Ovary (tissue), 10 donors: ENCODE measurements at regions of chr7 and their contacts with region 1.

Region 1: DNA sequence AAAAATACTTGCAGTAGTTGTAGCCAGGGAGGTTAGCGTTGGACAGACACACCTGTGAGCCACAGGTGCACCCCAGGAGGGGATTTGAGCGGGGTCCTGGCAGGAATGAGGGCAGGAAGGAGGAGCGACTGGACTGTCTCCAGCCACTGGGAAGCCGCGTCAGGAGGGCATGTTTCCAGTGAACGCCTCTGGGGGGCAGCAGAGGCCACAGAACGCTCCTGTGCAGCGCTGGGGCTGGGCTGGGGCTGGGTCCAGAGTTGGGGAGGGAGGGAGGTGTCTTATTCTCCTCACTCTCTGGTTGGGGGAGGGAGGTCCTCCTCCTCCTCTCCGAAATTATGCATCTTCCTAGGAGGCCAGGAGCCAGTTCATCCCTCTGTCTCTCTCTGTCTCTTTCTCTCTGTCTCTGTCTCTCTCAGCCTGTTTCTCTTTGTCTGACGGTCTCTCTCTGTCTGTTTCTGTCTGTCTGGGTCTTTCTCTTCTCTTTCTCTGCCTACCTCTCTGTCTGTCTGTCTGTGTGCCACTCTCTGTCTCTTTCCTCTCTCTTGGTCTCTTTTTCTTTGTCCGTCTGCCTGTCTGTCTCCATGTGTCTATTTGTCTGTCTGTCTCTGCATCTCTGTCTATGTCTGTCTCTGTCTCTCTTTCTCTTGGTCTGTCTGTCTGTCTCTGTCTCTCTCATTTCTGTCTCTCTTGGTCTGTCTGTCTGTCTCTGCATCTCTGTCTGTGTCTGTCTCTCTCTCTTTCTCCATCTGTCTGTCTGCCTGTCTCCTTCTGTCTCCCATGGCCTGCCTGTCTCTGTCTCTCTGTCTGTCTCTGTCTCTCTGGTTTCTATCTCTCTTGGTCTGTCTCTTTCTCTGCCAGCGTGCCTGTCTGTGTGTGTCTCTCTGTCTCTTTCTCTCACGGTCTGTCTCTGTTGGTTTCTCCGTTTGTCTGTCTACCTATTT is 9.9 kb upstream of the PSMG3 start:
- DNase-seq: peak; percentile 58 to 82 (median 80)
- H3K4me3 ChIP-seq: no peak overlapping the region
- H3K27ac ChIP-seq: no peak overlapping the region
- H3K4me1 ChIP-seq: no peaks in the 10 kb centered on the region
- H3K27me3 ChIP-seq: no peaks in the 10 kb centered on the region
- CTCF ChIP-seq: peak; percentile 52 to 72 (median 64)
- EP300 ChIP-seq: no peak
- POLR2A ChIP-seq: no peak

Region 2: GRCh38 chr7:1529383-1530116 is 50.2 kb before region 1 on chr7:
- intact Hi-C with region 1: no loop called
- DNase-seq: peak in 3 of 5 donors; percentile 41 to 53 (median 44)
- H3K4me3 ChIP-seq: no peak overlapping the region
- H3K27ac ChIP-seq: no peak overlapping the region
- H3K4me1 ChIP-seq: peaks cover 16% of the 10 kb centered on the region
- H3K27me3 ChIP-seq: no peaks in the 10 kb centered on the region
- CTCF ChIP-seq: no peak
- EP300 ChIP-seq: no peak
- POLR2A ChIP-seq: no peak

Region 3: GRCh38 chr7:1749864-1750466 is 170.2 kb after region 1 on chr7:
- intact Hi-C with region 1: no loop called
- DNase-seq: no peak
- H3K4me3 ChIP-seq: no peak overlapping the region
- H3K27ac ChIP-seq: no peak overlapping the region
- H3K4me1 ChIP-seq: no peaks in the 10 kb centered on the region
- H3K27me3 ChIP-seq: no peaks in the 10 kb centered on the region
- CTCF ChIP-seq: no peak
- EP300 ChIP-seq: no peak
- POLR2A ChIP-seq: no peak

Region 4: GRCh38 chr7:3359982-3360381 is 1780.2 kb after region 1 on chr7:
- intact Hi-C with region 1: loop called in 1 of 4 experiments (anchors 5 kb)
- DNase-seq: no peak
- H3K4me3 ChIP-seq: no peak overlapping the region
- H3K27ac ChIP-seq: no peak overlapping the region
- H3K4me1 ChIP-seq: no peaks in the 10 kb centered on the region
- H3K27me3 ChIP-seq: no peaks in the 10 kb centered on the region
- CTCF ChIP-seq: no peak
- EP300 ChIP-seq: no peak
- POLR2A ChIP-seq: no peak